Uterus (tissue), 4 donors: ENCODE measurements at regions of chr20 and their contacts with region 1.

Region 1: GRCh38 chr20:61765871-61766654 is 299.6 kb downstream of the TAF4 start:
- DNase-seq: no peak
- H3K4me3 ChIP-seq: no peak overlapping the region
- H3K27ac ChIP-seq: no peak overlapping the region
- H3K4me1 ChIP-seq: no peaks in the 10 kb centered on the region
- H3K27me3 ChIP-seq: no peaks in the 10 kb centered on the region
- CTCF ChIP-seq: no peak
- POLR2A ChIP-seq: no peak

Region 2: DNA sequence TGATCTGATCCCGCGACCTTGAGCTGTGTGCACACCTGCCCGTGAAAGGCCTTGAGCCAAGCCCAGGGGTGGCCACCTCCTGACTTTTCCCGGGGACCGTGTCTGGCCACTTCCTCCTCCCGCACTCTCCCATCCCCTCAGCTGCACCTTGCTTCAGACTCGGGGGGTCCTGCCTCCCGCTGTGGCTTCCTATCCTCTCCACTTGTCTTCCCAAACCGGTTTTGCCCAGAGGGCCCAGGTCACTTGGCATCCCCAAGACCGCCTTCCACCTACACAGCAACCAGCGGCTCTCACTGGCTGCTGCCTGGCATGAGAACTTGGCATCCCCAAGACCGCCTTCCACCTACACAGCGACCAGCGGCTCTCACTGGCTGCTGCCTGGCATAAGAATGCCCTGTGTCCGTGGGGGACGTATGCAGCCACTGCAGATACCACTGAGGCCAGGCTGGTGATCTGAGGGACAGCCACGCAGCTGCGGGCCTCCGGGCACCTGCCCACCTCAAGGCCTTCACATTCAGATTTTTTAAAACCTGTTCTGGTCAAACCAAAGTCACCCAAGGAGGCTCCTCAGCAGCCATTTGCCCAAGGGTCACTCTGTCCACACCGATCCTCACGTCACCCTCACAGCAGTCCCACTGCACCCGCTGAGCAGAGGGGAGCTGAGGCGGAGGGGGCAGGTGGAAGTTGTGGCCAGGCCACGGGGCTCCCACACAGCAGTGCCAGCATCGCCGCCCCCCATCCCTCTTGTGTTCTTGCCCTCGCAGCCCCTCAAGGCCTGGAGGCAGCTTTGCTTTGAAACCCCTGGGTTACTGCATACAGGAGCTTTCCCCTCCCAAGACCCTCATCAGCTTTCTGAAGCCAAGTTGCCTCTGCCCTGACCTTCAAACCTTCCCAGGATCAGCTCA is 54.1 kb after region 1 on chr20:
- intact Hi-C with region 1: loop called (anchors 10 kb)
- DNase-seq: no peak
- H3K4me3 ChIP-seq: no peak overlapping the region
- H3K27ac ChIP-seq: no peak overlapping the region
- H3K4me1 ChIP-seq: no peaks in the 10 kb centered on the region
- H3K27me3 ChIP-seq: no peaks in the 10 kb centered on the region
- CTCF ChIP-seq: no peak
- POLR2A ChIP-seq: no peak